ENCODE measurements at regions of chr6 and their contacts with region 1.

Region 1: GRCh38 chr6:31888276-31889258 is 8.9 kb downstream of the EHMT2 start:
- DNase-seq: peak in 1 of 2 donors; percentile 85
- ATAC-seq: peak; percentile 55
- H3K4me3 ChIP-seq: no peak overlapping the region
- H3K27ac ChIP-seq: no peak overlapping the region
- H3K4me1 ChIP-seq: no peaks in the 10 kb centered on the region
- H3K27me3 ChIP-seq: no peaks in the 10 kb centered on the region

Region 2: DNA sequence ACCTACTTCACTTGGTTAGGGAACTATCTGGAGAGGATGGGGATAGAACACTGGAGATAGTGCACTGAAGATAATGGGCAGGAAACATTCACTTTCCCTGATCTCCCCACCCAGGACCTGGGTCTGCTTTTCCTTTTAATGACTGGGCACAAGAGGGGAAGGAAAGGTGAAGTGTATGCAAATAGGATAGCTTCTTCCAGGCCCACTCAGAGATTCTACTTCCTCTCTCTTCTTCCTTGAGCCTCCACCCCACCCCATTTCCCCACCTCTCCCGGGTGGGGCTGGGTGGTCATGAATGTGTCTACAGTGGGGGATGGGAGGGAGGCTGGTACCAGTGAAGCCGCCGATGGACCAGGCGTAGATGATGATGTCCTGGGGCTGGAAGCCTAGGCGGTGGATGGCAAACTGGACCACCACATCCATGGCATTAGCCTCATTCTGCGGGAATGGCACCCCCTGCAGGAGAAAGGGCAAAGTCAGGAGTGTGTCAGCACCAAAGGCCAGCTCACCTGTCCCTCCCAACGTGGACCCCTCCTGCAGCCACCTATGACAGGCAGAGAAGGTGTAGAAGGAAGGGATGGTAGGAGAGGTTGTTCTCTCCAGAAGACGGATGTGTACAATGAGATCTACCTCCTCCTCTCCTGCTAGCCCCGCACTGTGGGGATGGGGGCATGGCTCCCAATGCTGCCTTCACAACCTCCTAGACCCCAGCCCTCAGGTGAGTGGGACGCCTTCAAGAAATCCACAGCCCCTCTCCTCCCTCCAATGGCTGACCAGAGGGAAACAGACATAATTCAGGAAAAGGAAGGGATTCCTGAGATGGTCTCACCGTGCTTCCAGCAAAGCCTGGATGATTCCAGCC is 199.1 kb before region 1 on chr6:
- intact Hi-C with region 1: loop called in 1 of 2 experiments (anchors 10 kb)
- DNase-seq: no peak
- ATAC-seq: no peak
- H3K4me3 ChIP-seq: no peak overlapping the region
- H3K27ac ChIP-seq: no peak overlapping the region
- H3K4me1 ChIP-seq: no peaks in the 10 kb centered on the region
- H3K27me3 ChIP-seq: no peaks in the 10 kb centered on the region

Measured in aorta (tissue), 5 donors.